Colonic mucosa (tissue), 4 donors: ENCODE measurements at regions of chr19 and their contacts with region 1.

Region 1: DNA sequence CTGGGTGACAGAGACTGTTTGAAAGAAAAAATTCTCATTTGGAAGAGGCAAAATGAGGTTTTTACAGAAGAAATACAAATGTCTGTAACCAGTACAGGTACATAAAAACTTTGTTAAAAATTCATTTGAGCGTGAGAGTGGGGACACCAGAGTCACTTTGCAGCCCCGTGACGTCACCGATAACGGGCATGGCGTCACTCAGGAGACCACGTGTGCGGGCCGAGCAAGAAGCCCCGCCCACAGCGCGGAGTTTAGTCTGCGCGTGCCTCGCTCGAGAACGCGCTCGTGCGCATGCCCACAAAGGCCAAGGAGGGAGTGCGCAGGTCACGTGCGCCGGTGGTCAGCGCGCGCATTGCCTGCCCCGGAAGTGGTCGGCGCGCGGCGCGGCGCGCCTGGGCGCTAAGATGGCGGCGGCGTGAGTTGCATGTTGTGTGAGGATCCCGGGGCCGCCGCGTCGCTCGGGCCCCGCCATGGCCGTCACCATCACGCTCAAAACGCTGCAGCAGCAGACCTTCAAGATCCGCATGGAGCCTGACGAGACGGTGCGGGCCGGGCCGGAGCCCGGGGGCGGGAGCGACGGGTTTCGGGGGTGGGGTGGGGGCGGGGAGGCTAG is at the start of gene RAD23A:
- DNase-seq: peak; percentile 97
- H3K4me3 ChIP-seq: peak within 1 kb of the TSS; percentile 92
- H3K27ac ChIP-seq: peak within 1 kb of the TSS; percentile 94
- H3K4me1 ChIP-seq: peaks cover 19% of the 10 kb centered on the region
- H3K27me3 ChIP-seq: no peaks in the 10 kb centered on the region
- CTCF ChIP-seq: no peak
- total RNA-seq, gene RAD23A: 78.5 to 121 TPM

Region 2: GRCh38 chr19:12859546-12859945 is 86.0 kb before region 1 on chr19:
- intact Hi-C with region 1: no loop called
- DNase-seq: no peak
- H3K4me3 ChIP-seq: no peak overlapping the region
- H3K27ac ChIP-seq: no peak overlapping the region
- H3K4me1 ChIP-seq: no peaks in the 10 kb centered on the region
- H3K27me3 ChIP-seq: no peaks in the 10 kb centered on the region
- CTCF ChIP-seq: no peak

Region 3: DNA sequence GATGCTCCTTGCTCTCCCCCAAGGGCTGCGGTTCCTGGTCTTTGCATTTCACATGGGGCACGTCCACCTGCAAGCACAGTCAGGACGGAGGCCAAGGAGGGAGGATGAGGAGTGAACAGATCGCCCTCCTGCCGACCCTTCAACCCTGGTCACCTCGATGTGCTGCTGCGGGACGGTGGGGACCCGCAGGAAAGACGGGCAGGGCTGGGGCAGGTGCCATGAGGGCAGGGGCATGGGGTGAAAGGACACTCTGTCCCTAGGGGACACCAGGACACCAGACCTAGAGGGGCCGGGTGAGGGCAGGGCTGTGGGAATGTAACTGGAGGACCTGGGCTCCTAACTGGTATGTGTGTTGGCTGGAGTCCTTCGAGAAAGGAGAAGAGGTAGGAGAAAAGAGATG is 27.3 kb before region 1 on chr19:
- intact Hi-C with region 1: loop called (anchors 2 kb)
- DNase-seq: no peak
- H3K4me3 ChIP-seq: no peak overlapping the region
- H3K27ac ChIP-seq: no peak overlapping the region
- H3K4me1 ChIP-seq: no peaks in the 10 kb centered on the region
- H3K27me3 ChIP-seq: no peaks in the 10 kb centered on the region
- CTCF ChIP-seq: no peak

Region 4: GRCh38 chr19:12994701-12995595 is 49.4 kb after region 1 on chr19 and contains the start of gene NFIX:
- intact Hi-C with region 1: no loop called
- DNase-seq: peak; percentile 71
- H3K4me3 ChIP-seq: peak within 1 kb of the TSS; percentile 65
- H3K27ac ChIP-seq: peak within 1 kb of the TSS; percentile 61
- H3K4me1 ChIP-seq: no peaks in the 10 kb centered on the region
- H3K27me3 ChIP-seq: no peaks in the 10 kb centered on the region
- CTCF ChIP-seq: no peak
- total RNA-seq, gene NFIX: 70.9 to 73.8 TPM